Activated CD4-positive, alpha-beta T cell treated with anti-CD3 and anti-CD28 coated beads for 36 hours (primary cell): ENCODE measurements at regions of chr1 and their contacts with region 1.

Region 1: GRCh38 chr1:146019231-146020057 is 2.1 kb downstream of the HJV start:
- DNase-seq: peak; percentile 30
- ATAC-seq: peak; percentile 19
- H3K4me3 Mint-ChIP-seq: no peak overlapping the region
- H3K27ac Mint-ChIP-seq: no peak overlapping the region
- H3K4me1 Mint-ChIP-seq: peaks cover 8% of the 10 kb centered on the region
- H3K27me3 Mint-ChIP-seq: peaks cover 36% of the 10 kb centered on the region

Region 2: DNA sequence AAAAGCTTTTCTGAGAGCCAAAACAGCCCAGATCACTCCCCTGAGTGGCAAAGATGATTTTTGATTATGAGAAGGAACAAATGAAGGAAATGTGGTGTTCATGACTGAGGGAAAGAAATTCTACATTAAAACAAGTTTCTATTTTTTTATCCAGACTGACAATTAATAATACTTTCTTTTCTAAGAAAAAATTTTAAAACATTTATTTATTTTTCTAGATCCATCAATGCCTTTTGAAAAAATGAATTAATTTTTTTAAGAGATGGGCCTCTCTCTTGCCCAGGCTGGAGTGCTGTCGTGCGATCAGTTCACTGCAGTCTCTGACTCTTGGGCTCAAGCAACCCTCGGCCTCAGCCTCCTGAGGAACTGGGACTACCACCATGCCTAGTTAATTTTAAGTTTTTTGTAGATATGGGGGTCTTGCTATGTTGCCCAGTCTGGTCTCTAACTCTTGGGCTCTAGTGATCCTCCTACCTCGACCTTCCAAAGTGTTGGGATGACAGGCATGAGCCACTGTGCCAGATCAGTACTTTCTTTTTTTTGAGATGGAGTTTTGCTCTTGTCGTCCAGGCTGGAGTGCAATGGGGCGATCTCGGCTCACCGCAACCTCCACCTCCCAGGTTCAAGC is 11.8 kb before region 1 on chr1:
- CTCF ChIA-PET with region 1: interaction called, 17 read pairs
- POLR2A ChIA-PET with region 1: no interaction called
- intact Hi-C with region 1: no loop called
- DNase-seq: no peak
- ATAC-seq: no peak
- H3K4me3 Mint-ChIP-seq: peak overlapping the region; percentile 58
- H3K27ac Mint-ChIP-seq: peak overlapping the region; percentile 76
- H3K4me1 Mint-ChIP-seq: peaks cover 38% of the 10 kb centered on the region
- H3K27me3 Mint-ChIP-seq: no peaks in the 10 kb centered on the region